GM23248 (cell line): ENCODE measurements at regions of chr12 and their contacts with region 1.

Region 1: GRCh38 chr12:42023733-42024494 is 120.8 kb downstream of the GXYLT1 start:
- DNase-seq: peak; percentile 83
- H3K4me3 ChIP-seq: peak overlapping the region; percentile 66
- H3K27ac ChIP-seq: no peak overlapping the region
- H3K4me1 ChIP-seq: no peaks in the 10 kb centered on the region
- H3K27me3 ChIP-seq: 0 out of 2 replicates have a peak, but pooled peaks cover under 1% of the 10 kb centered on the region

Region 2: DNA sequence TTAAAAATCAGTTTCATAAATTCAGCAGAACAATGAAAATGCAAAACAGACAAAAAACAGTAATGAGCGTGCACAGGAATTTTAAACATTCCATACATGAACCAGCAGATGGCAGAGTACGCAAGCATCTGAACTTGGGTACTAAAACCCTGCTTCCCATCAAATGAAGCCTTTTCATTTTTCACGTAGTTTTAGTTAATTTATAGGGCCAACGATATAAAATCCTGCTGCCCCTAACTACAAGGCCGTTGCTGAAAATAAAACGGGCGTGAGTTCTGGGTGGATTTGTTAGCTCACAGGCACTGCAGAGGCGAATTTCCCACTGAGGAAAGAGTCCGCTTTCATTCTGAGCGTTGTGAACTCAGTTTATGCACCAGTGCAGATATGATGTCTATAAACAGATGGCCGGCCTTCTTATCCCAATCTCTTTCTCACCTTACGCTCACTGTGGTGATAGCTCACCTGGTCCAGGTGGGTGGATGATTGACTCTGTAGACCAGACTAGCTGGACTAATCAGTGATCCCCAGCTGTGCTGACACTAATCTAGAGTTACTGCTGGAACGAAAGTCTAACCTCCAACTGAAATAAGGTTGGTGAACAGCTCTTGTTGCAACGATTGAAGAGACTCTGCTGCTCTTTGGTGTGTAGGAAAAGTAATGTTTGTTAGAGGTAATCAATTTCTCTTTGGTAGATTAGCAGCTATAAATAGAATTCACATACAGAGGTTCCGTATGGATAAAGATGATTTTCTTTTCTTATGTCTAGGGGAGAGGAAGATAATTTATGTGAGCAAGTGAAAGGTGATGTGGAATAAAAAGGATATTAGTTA is 746.6 kb before region 1 on chr12:
- in situ Hi-C with region 1: loop called (anchors 10 kb)
- DNase-seq: peak; percentile 75
- H3K4me3 ChIP-seq: no peak overlapping the region
- H3K27ac ChIP-seq: no peak overlapping the region
- H3K4me1 ChIP-seq: no peaks in the 10 kb centered on the region
- H3K27me3 ChIP-seq: no peaks in the 10 kb centered on the region